Posterior vena cava (tissue), 2 donors: ENCODE measurements at regions of chr4 and their contacts with region 1.

Region 1: GRCh38 chr4:160835789-160836188 is 1328.0 kb downstream of the FSTL5 start:
- DNase-seq: no peak

Region 2: GRCh38 chr4:159837071-159837470 is 998.7 kb before region 1 on chr4:
- intact Hi-C with region 1: loop called in 1 of 2 experiments (anchors 10 kb)
- DNase-seq: no peak

Region 3: GRCh38 chr4:160808174-160808573 is 27.6 kb before region 1 on chr4:
- intact Hi-C with region 1: no loop called
- DNase-seq: no peak